ENCODE measurements at regions of chr16 and their contacts with region 1.

Region 1: DNA sequence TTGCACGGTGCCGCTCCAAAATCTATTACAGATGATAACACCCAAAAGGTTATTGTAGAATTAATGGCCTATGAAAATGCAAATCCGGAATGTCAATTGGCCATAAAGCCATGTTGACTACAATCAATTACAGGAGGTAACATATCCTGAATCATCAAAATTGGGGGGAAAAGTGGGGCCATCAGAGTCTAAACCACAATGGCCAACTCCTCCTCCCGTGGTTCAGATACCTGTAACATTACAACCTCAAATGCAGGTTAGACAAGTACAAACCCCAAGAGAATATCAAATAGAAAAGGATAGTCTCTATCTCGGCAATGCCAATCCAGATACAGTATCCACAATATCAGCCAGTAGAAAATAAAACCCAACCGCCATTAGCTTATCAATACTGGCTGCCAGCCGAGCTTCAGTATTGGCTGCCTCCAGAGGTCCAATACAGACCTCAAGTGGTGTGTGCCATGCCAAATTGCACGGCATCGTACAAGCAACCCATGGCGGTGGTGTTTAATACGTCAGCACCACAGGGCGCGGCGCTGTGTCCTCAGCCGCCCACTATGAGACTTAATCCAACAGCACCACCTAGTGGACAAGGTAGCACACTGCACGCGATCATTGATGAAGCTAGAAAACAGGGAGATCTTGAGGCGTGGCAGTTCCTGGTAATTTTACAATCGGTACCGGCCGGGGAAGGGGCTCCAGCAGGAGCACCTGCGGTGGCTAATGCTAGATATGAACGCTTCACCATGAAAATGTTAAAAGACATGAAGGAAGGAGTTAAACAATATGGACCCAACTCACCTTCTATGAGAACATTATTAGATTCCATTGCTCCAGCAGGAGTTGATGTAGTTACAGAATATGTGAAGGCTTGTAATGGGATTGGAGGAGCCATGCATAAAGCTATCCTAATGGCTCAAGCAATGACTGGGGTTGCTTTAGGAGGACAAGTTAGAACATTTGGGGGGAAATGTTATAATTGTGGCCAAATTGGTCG is 15.2 kb downstream of the FLYWCH1 start:
- DNase-seq: no peak
- ATAC-seq: peak; percentile 100
- H3K4me3 ChIP-seq: no peak overlapping the region
- H3K27ac ChIP-seq: no peak overlapping the region
- H3K4me1 ChIP-seq: no peaks in the 10 kb centered on the region
- H3K27me3 ChIP-seq: no peaks in the 10 kb centered on the region
- CTCF ChIP-seq: peak; percentile 89 to 95 (median 93)
- EP300 ChIP-seq: no peak
- POLR2A ChIP-seq: no peak
- RAD21 ChIP-seq: peak; percentile 66

Region 2: GRCh38 chr16:2874912-2875362 is 52.0 kb before region 1 on chr16:
- CTCF ChIA-PET with region 1: interaction called, 27 read pairs
- POLR2A ChIA-PET with region 1: no interaction called
- RAD21 ChIA-PET with region 1: interaction called, 3 read pairs
- SMC1A ChIA-PET with region 1: interaction called, 4 read pairs
- in situ Hi-C with region 1: no loop called
- intact Hi-C with region 1: no loop called
- DNase-seq: peak; percentile 3
- ATAC-seq: peak; percentile 100
- H3K4me3 ChIP-seq: no peak overlapping the region
- H3K27ac ChIP-seq: no peak overlapping the region
- H3K4me1 ChIP-seq: no peaks in the 10 kb centered on the region
- H3K27me3 ChIP-seq: no peaks in the 10 kb centered on the region; a peak in 1 of 4 replicates
- CTCF ChIP-seq: peak; percentile 95 to 98 (median 97)
- EP300 ChIP-seq: no peak
- POLR2A ChIP-seq: no peak
- RAD21 ChIP-seq: peak; percentile 52

Region 3: GRCh38 chr16:2905431-2906387 is 21.2 kb before region 1 on chr16:
- CTCF ChIA-PET with region 1: interaction called, 20 read pairs
- POLR2A ChIA-PET with region 1: interaction called, 7 read pairs
- RAD21 ChIA-PET with region 1: interaction called, 3 read pairs
- SMC1A ChIA-PET with region 1: interaction called, 4 read pairs
- in situ Hi-C with region 1: no loop called
- intact Hi-C with region 1: no loop called
- DNase-seq: peak; percentile 94
- ATAC-seq: peak; percentile 91
- H3K4me3 ChIP-seq: peak overlapping the region; percentile 75
- H3K27ac ChIP-seq: no peak overlapping the region
- H3K4me1 ChIP-seq: peaks cover 6% of the 10 kb centered on the region
- H3K27me3 ChIP-seq: no peaks in the 10 kb centered on the region
- CTCF ChIP-seq: no peak
- EP300 ChIP-seq: no peak
- POLR2A ChIP-seq: no peak
- RAD21 ChIP-seq: no peak

Region 4: GRCh38 chr16:2939968-2940367 is 13.0 kb after region 1 on chr16:
- CTCF ChIA-PET with region 1: interaction called, 14 read pairs
- POLR2A ChIA-PET with region 1: no interaction called
- RAD21 ChIA-PET with region 1: interaction called, 3 read pairs
- SMC1A ChIA-PET with region 1: no interaction called
- in situ Hi-C with region 1: no loop called
- intact Hi-C with region 1: no loop called
- DNase-seq: no peak
- ATAC-seq: no peak
- H3K4me3 ChIP-seq: no peak overlapping the region
- H3K27ac ChIP-seq: no peak overlapping the region
- H3K4me1 ChIP-seq: peaks cover 5% of the 10 kb centered on the region; the same call in 1 of the 2 replicates
- H3K27me3 ChIP-seq: no peaks in the 10 kb centered on the region
- CTCF ChIP-seq: no peak
- EP300 ChIP-seq: no peak
- POLR2A ChIP-seq: no peak
- RAD21 ChIP-seq: no peak

Region 5: GRCh38 chr16:2960183-2961032 is 33.5 kb after region 1 on chr16:
- CTCF ChIA-PET with region 1: interaction called, 20 read pairs
- POLR2A ChIA-PET with region 1: no interaction called
- RAD21 ChIA-PET with region 1: interaction called, 4 read pairs
- SMC1A ChIA-PET with region 1: no interaction called
- in situ Hi-C with region 1: no loop called
- intact Hi-C with region 1: no loop called
- DNase-seq: no peak
- ATAC-seq: no peak
- H3K4me3 ChIP-seq: no peak overlapping the region
- H3K27ac ChIP-seq: no peak overlapping the region
- H3K4me1 ChIP-seq: peaks cover 34% of the 10 kb centered on the region
- H3K27me3 ChIP-seq: no peaks in the 10 kb centered on the region
- CTCF ChIP-seq: 0 out of 6 replicates have a peak, but pooled peaks of 1 of the 3 experiments have one; percentile 4
- EP300 ChIP-seq: no peak
- POLR2A ChIP-seq: no peak
- RAD21 ChIP-seq: no peak

Region 6: GRCh38 chr16:2980227-2981086 is 53.5 kb after region 1 on chr16 and contains the start of gene PKMYT1:
- CTCF ChIA-PET with region 1: interaction called, 10 read pairs
- POLR2A ChIA-PET with region 1: no interaction called
- RAD21 ChIA-PET with region 1: interaction called, 4 read pairs
- SMC1A ChIA-PET with region 1: interaction called, 4 read pairs
- in situ Hi-C with region 1: no loop called
- intact Hi-C with region 1: loop called (anchors 5 kb)
- DNase-seq: peak; percentile 61
- ATAC-seq: peak; percentile 89
- H3K4me3 ChIP-seq: peak within 1 kb of the TSS; percentile 74
- H3K27ac ChIP-seq: peak within 1 kb of the TSS; percentile 88
- H3K4me1 ChIP-seq: peaks cover 7% of the 10 kb centered on the region
- H3K27me3 ChIP-seq: no peaks in the 10 kb centered on the region
- CTCF ChIP-seq: no peak
- EP300 ChIP-seq: no peak
- POLR2A ChIP-seq: peak; percentile 98
- RAD21 ChIP-seq: no peak
- polyA plus RNA-seq, gene PKMYT1: 4.6 to 20.2 TPM

Region 7: GRCh38 chr16:3364774-3365427 is 438.0 kb after region 1 on chr16:
- CTCF ChIA-PET with region 1: no interaction called
- POLR2A ChIA-PET with region 1: no interaction called
- RAD21 ChIA-PET with region 1: no interaction called
- SMC1A ChIA-PET with region 1: no interaction called
- in situ Hi-C with region 1: no loop called
- intact Hi-C with region 1: no loop called
- DNase-seq: peak; percentile 50
- ATAC-seq: peak; percentile 98
- H3K4me3 ChIP-seq: peak overlapping the region; percentile 57
- H3K27ac ChIP-seq: peak overlapping the region; percentile 61
- H3K4me1 ChIP-seq: no peaks in the 10 kb centered on the region
- H3K27me3 ChIP-seq: no peaks in the 10 kb centered on the region
- CTCF ChIP-seq: no peak
- EP300 ChIP-seq: no peak
- POLR2A ChIP-seq: peak; percentile 59; the same call in 1 of the 2 replicates
- RAD21 ChIP-seq: no peak

Measured in GM12878 (cell line).